Activated naive CD4-positive, alpha-beta T cell treated with anti-CD3 and anti-CD28 coated beads for 36 hours (primary cell): ENCODE measurements at regions of chr1 and their contacts with region 1.

Region 1: GRCh38 chr1:12619792-12620487 is 1.9 kb upstream of the DHRS3 start:
- DNase-seq: peak; percentile 87
- H3K4me3 Mint-ChIP-seq: peak overlapping the region; percentile 97
- H3K27ac Mint-ChIP-seq: peak overlapping the region; percentile 68
- H3K4me1 Mint-ChIP-seq: peaks cover 35% of the 10 kb centered on the region
- H3K27me3 Mint-ChIP-seq: no peaks in the 10 kb centered on the region

Region 2: DNA sequence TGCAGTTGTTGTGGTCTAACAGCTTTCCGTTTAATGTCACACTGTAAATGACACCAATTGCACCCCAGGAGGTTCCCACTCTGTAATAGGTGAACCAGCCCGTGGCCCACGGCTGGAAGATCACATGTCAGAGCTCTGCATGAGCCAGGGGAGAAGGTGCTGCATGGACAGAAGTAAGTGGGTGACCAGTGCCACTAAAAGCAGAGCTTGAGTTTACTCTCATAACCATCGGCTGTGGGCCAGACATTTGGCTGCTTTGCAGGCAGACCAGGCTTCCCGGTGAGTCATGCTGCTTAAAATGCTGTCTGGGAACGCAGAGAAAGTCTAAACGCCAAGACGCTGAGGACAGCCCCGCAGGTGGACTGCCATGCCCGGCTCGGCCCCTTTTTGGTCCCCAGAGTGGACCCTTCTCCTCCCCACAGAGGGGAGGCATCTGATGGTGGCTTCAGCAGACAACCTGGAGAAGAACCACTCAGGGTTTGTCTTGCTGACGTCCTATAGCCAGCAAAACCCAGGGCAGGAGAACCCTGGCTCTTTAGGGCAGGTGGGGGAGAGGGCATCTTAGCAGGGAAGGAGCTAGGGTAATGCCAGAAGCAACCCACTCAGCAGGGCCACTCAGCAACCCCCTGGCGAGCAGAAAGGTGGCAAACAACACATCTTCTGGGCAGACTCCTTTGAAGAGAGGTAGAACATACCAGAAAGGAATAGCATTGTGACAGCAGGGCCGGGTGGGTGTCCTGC is 701.0 kb before region 1 on chr1:
- CTCF ChIA-PET with region 1: no interaction called
- intact Hi-C with region 1: no loop called
- DNase-seq: no peak
- H3K4me3 Mint-ChIP-seq: no peak overlapping the region
- H3K27ac Mint-ChIP-seq: no peak overlapping the region
- H3K4me1 Mint-ChIP-seq: peaks cover 18% of the 10 kb centered on the region
- H3K27me3 Mint-ChIP-seq: no peaks in the 10 kb centered on the region

Region 3: DNA sequence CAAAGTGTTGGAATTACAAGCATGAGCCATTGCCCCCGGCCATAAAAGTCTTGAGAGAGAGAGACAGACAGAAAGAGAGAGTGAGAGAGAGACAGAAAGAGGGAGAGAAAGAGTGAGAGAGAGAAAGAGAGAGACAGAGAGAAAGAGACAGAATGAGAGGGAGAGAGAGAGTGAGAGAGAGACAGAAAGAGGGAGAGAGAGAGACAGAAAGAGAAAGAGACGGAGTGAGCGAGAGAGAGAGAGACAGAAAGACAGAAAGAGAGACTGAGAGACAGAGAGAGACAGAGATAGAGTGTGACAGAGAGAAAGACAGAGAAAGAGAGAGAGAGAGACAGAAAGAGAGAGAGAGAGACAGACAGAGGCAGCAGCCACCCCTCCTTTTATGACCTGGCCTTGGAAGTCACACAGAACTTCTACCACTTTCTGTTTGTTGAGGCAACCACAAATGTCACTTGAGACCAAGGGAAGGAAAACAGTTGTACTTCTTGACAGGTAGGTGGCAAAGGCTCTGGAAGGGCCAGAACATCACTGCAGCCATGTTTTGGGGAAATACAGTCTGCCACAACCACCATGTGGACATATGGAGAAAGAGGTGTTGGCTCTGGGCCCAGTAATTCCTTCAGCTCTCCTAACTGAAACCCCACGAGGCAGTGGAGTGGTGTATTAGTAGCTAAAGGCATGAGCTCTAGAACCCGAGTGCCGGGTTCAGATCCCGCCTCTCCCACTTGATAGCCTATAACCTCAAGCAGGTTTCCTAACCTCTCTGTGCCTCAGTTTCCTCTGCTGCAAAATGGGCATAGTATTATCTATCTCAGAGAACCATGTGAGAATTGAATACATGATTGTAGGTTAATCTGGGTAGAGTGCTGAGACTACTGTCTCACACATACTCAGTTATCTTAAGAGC is 506.3 kb before region 1 on chr1:
- CTCF ChIA-PET with region 1: no interaction called
- intact Hi-C with region 1: loop called (anchors 2 kb)
- DNase-seq: no peak
- H3K4me3 Mint-ChIP-seq: no peak overlapping the region
- H3K27ac Mint-ChIP-seq: no peak overlapping the region
- H3K4me1 Mint-ChIP-seq: peaks cover 4% of the 10 kb centered on the region
- H3K27me3 Mint-ChIP-seq: no peaks in the 10 kb centered on the region

Region 4: DNA sequence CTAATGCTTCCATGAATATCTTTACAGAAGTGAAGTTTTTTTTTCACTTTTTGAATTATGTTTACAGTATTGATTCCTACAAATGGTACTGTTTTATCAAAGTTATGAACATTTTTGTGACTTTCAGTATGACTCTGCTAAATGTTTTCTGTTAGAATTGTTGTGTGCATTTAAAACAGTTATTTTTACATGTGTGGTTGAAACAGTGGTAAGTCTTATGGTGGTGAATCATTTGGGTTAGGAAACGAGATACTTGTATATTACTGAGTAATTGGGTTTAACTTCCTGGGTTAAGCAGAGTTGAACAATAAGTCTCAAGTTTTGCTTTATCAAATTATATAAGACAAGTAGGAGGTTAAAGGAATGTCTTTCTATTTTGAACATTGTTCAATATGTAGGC is 323.3 kb before region 1 on chr1:
- CTCF ChIA-PET with region 1: interaction called, 3 read pairs
- intact Hi-C with region 1: loop called (anchors 1 kb)
- DNase-seq: no peak
- H3K4me3 Mint-ChIP-seq: no peak overlapping the region
- H3K27ac Mint-ChIP-seq: peak overlapping the region; percentile 51
- H3K4me1 Mint-ChIP-seq: peaks cover 30% of the 10 kb centered on the region
- H3K27me3 Mint-ChIP-seq: no peaks in the 10 kb centered on the region

Region 5: GRCh38 chr1:12407050-12407961 is 212.6 kb before region 1 on chr1:
- CTCF ChIA-PET with region 1: interaction called, 8 read pairs
- intact Hi-C with region 1: loop called (anchors 1 kb)
- DNase-seq: peak; percentile 46
- H3K4me3 Mint-ChIP-seq: no peak overlapping the region
- H3K27ac Mint-ChIP-seq: no peak overlapping the region
- H3K4me1 Mint-ChIP-seq: peaks cover 38% of the 10 kb centered on the region
- H3K27me3 Mint-ChIP-seq: no peaks in the 10 kb centered on the region

Region 6: DNA sequence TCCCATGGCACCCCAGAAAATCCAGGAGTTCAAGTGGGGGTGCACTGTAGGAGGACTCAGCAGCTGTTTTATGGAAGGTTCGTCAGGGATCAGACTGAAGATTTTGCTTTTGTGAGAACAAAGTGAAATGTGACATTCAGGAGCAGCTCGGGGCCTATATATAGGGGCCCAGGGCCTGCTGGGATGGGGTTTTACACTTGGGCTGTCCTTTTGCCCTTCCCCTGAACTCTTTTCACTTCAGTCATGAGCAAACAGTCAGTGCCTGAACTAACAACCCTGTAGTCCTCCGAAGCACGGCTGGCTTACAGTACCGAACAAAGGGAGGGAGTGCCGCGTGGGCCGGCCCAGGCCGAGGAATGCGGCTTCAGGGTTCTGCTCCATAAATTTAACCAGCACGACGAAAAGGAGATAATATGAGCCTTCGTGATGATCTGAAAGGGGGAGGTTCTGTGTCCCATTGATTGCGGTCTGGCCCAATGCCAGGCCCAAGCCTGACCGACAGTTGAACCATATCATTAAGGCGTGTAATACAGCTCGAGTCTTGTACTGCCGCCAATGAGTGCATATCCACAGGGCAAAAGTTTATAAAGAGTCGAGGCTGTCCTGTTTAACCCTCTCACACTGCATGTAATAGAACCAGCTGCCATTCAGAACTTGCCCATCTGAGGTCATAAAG is 141.9 kb before region 1 on chr1:
- CTCF ChIA-PET with region 1: no interaction called
- intact Hi-C with region 1: loop called (anchors 1 kb)
- DNase-seq: peak; percentile 49
- H3K4me3 Mint-ChIP-seq: peak overlapping the region; percentile 59
- H3K27ac Mint-ChIP-seq: peak overlapping the region; percentile 91
- H3K4me1 Mint-ChIP-seq: peaks cover 90% of the 10 kb centered on the region
- H3K27me3 Mint-ChIP-seq: no peaks in the 10 kb centered on the region

Region 7: DNA sequence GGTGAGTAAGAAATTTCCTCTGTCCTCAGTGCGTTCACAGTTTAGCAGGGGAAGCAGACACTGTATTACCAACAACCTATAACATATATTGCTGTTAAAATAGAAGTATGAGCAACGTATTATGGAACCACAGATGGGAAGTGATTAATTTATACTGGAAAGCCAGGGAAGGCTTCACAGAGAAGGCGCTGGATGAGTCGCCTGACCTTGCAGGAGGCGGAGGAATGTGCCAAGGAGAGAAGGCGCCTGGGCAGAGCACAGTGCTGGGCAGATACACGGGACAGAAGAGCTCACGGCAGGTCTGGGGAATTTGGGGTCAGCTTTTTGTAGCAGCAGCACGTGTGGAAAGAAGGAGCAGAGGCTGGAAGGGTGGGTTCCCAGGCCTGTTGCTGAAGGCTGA is 118.3 kb before region 1 on chr1:
- CTCF ChIA-PET with region 1: no interaction called
- intact Hi-C with region 1: no loop called
- DNase-seq: no peak
- H3K4me3 Mint-ChIP-seq: no peak overlapping the region
- H3K27ac Mint-ChIP-seq: peak overlapping the region; percentile 63
- H3K4me1 Mint-ChIP-seq: peaks cover 43% of the 10 kb centered on the region
- H3K27me3 Mint-ChIP-seq: no peaks in the 10 kb centered on the region

Region 8: GRCh38 chr1:12604114-12604874 is 15.6 kb before region 1 on chr1:
- CTCF ChIA-PET with region 1: interaction called, 14 read pairs
- intact Hi-C with region 1: loop called (anchors 1 kb)
- DNase-seq: peak; percentile 90
- H3K4me3 Mint-ChIP-seq: peak overlapping the region; percentile 10
- H3K27ac Mint-ChIP-seq: peak overlapping the region; percentile 79
- H3K4me1 Mint-ChIP-seq: peaks cover 71% of the 10 kb centered on the region
- H3K27me3 Mint-ChIP-seq: no peaks in the 10 kb centered on the region